Activated T-helper 1 cell treated with anti-CD3 and anti-CD28 coated beads, Interleukin-12 subunit alpha, Interleukin-12 subunit beta, Interleukin-2, Interleukin-4 antibody, amounts not matched to agents 30 ng/mL and 10 ng/mL and 1 ng/mL, durations not matched to agents 14 hours and 24 hours and 36 hours (primary cell): ENCODE measurements at regions of chr12 and their contacts with region 1.

Region 1: GRCh38 chr12:25052196-25052913 is 103.5 kb upstream of the BCAT1 start:
- DNase-seq: peak; percentile 43
- H3K4me3 Mint-ChIP-seq: peak overlapping the region; percentile 92
- H3K27ac Mint-ChIP-seq: peak overlapping the region; percentile 99
- H3K4me1 Mint-ChIP-seq: peaks cover 56% of the 10 kb centered on the region
- H3K27me3 Mint-ChIP-seq: peaks cover 4% of the 10 kb centered on the region

Region 2: DNA sequence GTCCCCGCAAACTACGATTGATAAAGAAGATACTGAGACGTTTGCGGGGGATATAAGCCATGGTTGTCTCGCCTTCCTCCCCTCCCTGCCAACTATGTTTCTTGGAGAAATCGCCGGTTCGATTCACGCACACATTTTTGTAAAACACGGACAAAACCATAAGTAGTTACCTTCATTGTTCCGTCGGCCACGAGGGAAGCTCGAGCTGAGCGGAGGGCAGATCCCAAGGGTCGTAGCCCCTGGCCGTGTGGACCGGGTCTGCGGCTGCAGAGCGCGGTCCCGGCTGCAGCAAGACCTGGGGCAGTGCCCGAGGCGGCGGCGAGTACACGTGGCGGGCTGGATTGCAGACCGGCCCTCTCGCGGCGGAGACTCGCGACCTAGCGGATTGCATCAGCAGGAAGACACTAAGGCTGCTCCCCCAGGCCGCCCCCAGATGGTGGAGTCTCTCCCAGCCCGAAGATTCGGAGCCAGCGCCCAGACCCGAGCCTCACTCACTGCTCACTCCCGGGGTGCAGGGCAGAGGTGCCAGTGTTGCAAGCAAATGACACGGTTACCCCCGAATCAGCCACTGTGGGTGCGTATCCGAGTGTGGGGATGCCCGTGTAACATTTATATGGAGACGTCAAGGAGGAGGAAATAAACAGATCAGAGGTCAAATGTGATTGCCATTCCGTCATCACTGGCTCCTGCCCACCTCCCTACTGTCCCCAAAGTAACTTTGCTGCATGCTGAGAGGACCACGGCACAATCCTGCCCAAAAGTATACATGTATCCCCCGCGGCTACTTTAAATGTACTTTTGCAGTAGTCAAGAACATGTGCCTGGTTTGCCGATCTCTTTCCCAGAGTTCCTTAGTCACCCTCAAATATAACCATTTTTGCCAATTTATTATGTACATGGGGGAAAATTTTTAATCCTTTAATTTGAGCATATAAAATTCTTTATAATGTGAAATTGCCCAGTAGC is 103.3 kb before region 1 on chr12 and contains the start of gene BCAT1:
- intact Hi-C with region 1: loop called (anchors 1 kb)
- DNase-seq: peak; percentile 33
- H3K4me3 Mint-ChIP-seq: peak within 1 kb of the TSS; percentile 92
- H3K27ac Mint-ChIP-seq: peak within 1 kb of the TSS; percentile 96
- H3K4me1 Mint-ChIP-seq: peaks cover 55% of the 10 kb centered on the region
- H3K27me3 Mint-ChIP-seq: peaks cover 3% of the 10 kb centered on the region
- total RNA-seq, gene BCAT1: 37.3 and 42.0 TPM in 2 replicates

Region 3: DNA sequence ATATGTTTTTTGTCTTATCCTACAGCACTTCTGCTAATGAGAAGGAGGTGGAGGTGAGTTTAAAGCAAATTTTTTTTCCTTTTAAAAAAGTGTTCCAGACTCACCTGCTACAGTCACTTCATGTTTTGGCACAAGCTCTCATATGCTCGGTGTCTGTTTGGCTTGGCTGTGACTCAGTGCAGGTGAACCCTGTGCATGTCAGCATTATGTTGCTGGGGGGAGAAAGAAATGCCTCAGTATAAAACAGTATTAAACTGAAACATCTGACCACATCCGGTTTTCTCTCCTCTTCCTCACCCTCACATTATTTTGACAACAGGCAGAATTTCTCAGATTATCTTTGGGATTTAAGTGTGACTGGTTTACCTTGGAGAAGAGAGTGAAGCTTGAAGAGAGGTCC is 37.4 kb after region 1 on chr12:
- intact Hi-C with region 1: loop called (anchors 5 kb)
- DNase-seq: no peak
- H3K4me3 Mint-ChIP-seq: no peak overlapping the region
- H3K27ac Mint-ChIP-seq: no peak overlapping the region
- H3K4me1 Mint-ChIP-seq: peaks cover 8% of the 10 kb centered on the region
- H3K27me3 Mint-ChIP-seq: no peaks in the 10 kb centered on the region

Region 4: DNA sequence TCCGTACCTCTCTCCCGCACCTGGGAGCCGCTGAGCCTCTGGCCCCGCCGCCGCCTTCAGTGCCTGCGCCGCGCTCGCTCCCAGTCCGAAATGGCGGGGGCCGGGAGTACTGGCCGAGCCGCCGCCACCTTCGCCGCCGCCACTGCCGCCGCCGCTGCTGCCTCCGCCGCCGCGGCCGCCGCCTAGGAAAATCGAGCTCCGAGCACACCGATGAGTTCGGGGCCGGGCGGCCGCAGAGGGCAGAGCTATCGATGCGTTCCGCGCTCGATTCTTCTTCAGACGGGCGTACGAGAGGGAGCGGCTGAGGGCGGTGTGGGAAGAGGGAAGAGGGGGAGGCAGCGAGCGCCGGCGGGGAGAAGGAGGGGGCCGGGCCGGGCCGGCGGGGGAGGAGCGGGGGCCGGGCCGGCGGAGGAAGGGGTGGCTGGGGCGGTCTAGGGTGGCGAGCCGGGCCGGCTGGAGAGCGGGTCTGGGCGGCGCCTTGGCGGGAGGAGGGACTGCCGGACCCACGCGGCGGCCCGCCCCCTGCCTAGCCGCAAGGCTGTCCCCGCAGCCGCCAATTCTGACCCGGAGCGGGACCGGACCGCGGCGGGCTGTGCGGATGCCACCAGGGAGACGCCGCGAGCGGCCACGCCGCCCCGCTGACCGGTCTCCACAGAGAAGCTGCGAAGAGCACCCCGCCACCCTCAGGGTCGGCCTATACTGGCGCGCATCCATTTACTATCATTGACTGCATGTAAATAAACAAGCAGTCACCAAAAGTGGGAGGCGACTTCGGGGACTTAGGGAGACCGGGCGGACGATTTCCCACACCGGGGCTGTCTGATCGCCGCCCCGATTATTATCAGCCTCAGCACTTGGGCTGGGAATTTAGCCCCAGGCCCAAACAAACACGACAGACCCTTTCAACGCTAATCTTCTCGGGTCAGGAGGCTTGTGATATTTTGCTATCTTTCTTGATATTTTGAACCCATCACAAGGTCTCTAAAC is 198.7 kb after region 1 on chr12 and contains the start of gene KRAS:
- intact Hi-C with region 1: loop called (anchors 2 kb)
- DNase-seq: peak; percentile 89
- H3K4me3 Mint-ChIP-seq: peak within 1 kb of the TSS; percentile 90
- H3K27ac Mint-ChIP-seq: peak within 1 kb of the TSS; percentile 96
- H3K4me1 Mint-ChIP-seq: peaks cover 45% of the 10 kb centered on the region
- H3K27me3 Mint-ChIP-seq: peaks cover 10% of the 10 kb centered on the region
- total RNA-seq, gene KRAS: 43.1 and 43.3 TPM in 2 replicates

Region 5: DNA sequence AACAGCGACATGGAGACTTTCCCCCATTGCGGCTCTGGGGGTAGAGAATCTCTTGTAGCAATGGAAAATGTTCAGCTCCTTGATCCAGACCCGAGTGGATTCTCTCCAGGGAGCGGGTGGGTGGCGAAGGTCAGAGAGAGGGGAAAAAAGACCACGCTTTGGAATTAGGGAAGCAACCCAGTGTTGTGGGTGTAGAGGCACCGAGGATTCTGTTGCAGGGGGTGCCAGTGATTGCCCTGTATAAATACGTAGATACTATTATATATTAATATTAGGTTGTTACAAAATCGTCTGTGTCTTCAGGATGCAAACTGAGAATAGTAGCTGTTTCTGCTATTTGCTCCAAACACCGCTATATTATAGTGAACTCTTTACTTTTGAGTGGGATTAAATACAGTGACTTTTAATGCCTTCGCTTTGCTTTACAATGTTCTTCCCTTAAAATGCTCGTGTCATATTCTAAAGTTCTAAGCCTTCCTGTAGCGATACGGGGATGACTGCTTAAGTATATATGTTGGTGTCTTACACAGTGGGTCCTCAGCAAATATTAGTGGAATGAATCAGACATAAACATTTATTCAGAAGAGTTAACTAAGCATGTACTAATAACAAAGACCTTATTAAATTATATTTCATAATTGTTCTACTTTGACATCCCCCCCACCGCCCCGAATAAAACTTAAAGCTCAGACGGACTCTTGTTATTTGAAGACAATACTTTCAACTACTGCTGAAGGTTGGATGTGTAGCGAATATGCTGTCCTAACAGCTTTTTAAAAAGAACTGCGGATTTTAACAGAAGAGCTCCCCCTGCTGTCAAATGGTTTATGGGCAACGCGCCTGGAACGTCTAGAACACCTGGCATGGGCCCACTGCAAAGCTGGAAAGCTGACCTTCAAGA is 334.7 kb after region 1 on chr12:
- intact Hi-C with region 1: loop called (anchors 1 kb)
- DNase-seq: peak; percentile 73
- H3K4me3 Mint-ChIP-seq: peak overlapping the region; percentile 89
- H3K27ac Mint-ChIP-seq: peak overlapping the region; percentile 98
- H3K4me1 Mint-ChIP-seq: peaks cover 64% of the 10 kb centered on the region
- H3K27me3 Mint-ChIP-seq: peaks cover 2% of the 10 kb centered on the region

Region 6: GRCh38 chr12:27014085-27014858 is 1961.9 kb after region 1 on chr12 and contains the start of gene TM7SF3:
- intact Hi-C with region 1: loop called (anchors 2 kb)
- DNase-seq: peak; percentile 94
- H3K4me3 Mint-ChIP-seq: peak within 1 kb of the TSS; percentile 91
- H3K27ac Mint-ChIP-seq: peak within 1 kb of the TSS; percentile 90
- H3K4me1 Mint-ChIP-seq: peaks cover 61% of the 10 kb centered on the region
- H3K27me3 Mint-ChIP-seq: peaks cover 2% of the 10 kb centered on the region
- total RNA-seq, gene TM7SF3: 43.5 and 47.0 TPM in 2 replicates